GM12878 (cell line): ENCODE measurements at regions of chr9 and their contacts with region 1.

Region 1: DNA sequence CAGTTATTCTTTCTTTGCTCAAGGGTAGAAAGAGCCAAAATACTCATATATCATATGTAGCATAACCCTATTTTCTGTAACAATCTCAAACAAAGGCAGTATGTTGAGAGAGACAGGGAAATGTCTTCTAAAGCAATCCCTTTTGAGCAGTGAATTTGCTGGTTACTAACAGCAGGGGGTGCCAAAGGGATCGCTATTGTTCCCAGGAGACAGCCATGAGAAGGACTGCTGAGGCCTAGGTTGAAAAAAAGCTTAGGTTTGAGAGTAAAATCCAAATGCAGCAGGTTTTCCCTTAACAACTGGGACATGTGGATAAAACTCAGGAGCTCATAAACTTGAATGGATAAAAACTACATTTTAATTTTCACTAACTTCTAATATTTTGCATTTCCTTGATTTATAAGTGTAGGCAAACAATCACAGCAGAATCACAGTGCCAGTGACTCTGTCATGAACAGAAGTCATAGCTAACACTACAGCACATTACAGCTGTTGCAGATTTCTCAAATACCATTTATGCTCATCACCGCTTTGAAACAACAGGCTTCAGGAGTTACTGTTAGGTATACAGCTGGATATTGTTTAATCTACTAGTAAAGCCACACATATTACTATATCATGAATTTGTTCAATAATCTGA is 148.4 kb downstream of the MAPKAP1 start:
- DNase-seq: peak; percentile 33
- ATAC-seq: peak; percentile 79
- H3K4me3 ChIP-seq: no peak overlapping the region
- H3K27ac ChIP-seq: no peak overlapping the region; the same call in 1 of the 2 replicates
- H3K4me1 ChIP-seq: peaks cover 28% of the 10 kb centered on the region
- H3K27me3 ChIP-seq: no peaks in the 10 kb centered on the region
- CTCF ChIP-seq: peak; percentile 79 to 90 (median 86)
- EP300 ChIP-seq: no peak
- POLR2A ChIP-seq: no peak
- RAD21 ChIP-seq: peak; percentile 91

Region 2: DNA sequence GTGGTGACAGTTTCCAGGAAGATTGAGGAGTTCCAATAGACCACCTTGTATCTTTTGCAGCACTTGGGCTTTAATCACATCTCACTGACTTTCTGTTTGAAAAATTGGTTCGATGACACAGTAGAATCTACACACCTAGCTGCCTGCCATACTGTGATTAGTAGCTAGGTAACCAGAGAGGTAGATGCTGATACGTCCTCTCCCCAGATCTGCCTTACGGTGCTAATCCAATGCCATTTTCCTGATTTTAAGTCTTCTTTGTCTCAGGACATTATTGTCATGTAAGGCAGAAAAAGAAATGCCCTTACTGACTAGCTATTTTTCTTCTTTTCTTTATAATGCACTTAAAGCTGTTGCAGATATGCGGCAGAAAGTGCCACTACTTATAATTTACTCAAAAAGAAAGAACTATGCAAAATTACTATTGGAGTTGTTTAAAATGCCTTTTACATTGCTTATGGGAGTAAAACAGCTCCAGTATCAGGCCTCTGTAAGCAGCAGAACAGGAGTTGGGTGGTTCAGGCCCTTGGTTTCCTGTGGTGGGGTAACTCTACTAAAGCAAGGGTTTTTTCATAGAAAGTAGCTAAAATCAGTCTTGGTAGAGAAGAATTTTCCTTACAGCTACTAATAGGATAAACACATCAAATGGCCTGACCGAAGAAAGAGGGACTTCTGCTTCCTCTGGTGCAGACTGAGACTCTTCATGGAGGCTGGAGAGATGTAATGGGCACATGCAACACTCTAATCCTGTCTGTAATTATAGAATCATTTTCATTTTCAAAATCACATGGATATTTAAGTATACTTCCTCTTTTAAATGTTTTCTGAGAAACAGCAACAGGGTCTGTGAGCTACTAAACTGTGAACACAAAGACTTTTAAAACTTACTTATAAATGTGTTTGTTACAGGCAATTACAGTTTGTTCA is 28.7 kb before region 1 on chr9:
- CTCF ChIA-PET with region 1: interaction called, 15 read pairs
- POLR2A ChIA-PET with region 1: no interaction called
- RAD21 ChIA-PET with region 1: interaction called, 19 read pairs
- SMC1A ChIA-PET with region 1: interaction called, 12 read pairs
- in situ Hi-C with region 1: no loop called
- intact Hi-C with region 1: no loop called
- DNase-seq: peak; percentile 57
- ATAC-seq: peak; percentile 91
- H3K4me3 ChIP-seq: no peak overlapping the region; the same call in 1 of the 2 replicates
- H3K27ac ChIP-seq: peak overlapping the region; percentile 75
- H3K4me1 ChIP-seq: peaks cover 30% of the 10 kb centered on the region
- H3K27me3 ChIP-seq: no peaks in the 10 kb centered on the region
- CTCF ChIP-seq: no peak
- EP300 ChIP-seq: no peak
- POLR2A ChIP-seq: no peak
- RAD21 ChIP-seq: no peak

Region 3: GRCh38 chr9:125580701-125581286 is 22.2 kb after region 1 on chr9:
- CTCF ChIA-PET with region 1: interaction called, 13 read pairs
- POLR2A ChIA-PET with region 1: no interaction called
- RAD21 ChIA-PET with region 1: interaction called, 18 read pairs
- SMC1A ChIA-PET with region 1: interaction called, 10 read pairs
- in situ Hi-C with region 1: no loop called
- intact Hi-C with region 1: no loop called
- DNase-seq: peak; percentile 25
- ATAC-seq: peak; percentile 94
- H3K4me3 ChIP-seq: no peak overlapping the region
- H3K27ac ChIP-seq: no peak overlapping the region
- H3K4me1 ChIP-seq: no peaks in the 10 kb centered on the region
- H3K27me3 ChIP-seq: no peaks in the 10 kb centered on the region
- CTCF ChIP-seq: no peak
- EP300 ChIP-seq: no peak
- POLR2A ChIP-seq: no peak
- RAD21 ChIP-seq: no peak

Region 4: DNA sequence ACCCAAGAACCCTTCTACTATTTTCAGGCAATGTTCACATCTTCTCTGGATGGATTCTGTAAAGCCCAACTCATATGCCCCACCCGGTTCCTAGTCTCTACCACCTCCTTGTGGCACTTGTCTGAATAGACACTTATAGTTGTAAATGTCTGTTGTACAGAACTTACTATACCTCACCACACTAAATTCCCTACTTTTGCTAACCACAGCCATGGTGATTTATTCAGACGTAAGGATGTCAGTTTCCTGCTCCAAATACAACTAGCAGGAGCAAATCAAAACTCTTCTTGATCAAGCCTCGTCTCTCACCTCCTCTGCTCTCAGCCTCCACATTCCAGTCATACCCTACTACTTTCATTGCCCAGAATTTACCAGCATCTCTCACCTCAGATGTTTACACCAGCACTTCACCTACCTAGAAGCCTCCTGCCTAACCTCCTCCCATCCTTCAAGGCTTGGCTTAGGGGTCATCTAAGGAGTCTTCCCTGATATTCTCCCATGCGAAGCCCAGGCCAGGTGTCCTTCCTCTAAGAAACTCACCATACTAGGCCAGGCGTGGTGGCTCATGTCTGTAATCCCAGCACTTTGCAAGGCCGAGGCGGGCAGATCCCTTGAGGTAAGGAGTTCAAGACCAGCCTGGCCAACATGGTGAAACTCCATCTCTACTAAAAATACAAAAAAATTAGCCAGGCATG is 73.0 kb after region 1 on chr9:
- CTCF ChIA-PET with region 1: interaction called, 60 read pairs
- POLR2A ChIA-PET with region 1: interaction called, 7 read pairs
- RAD21 ChIA-PET with region 1: interaction called, 75 read pairs
- SMC1A ChIA-PET with region 1: interaction called, 93 read pairs
- in situ Hi-C with region 1: loop called (anchors 5 kb)
- intact Hi-C with region 1: loop called (anchors 1 kb)
- DNase-seq: no peak
- ATAC-seq: peak; percentile 49
- H3K4me3 ChIP-seq: peak overlapping the region; percentile 32; the same call in 1 of the 2 replicates
- H3K27ac ChIP-seq: peak overlapping the region; percentile 98
- H3K4me1 ChIP-seq: peaks cover 75% of the 10 kb centered on the region
- H3K27me3 ChIP-seq: no peaks in the 10 kb centered on the region
- CTCF ChIP-seq: peak; percentile 69 to 74 (median 70)
- EP300 ChIP-seq: no peak
- POLR2A ChIP-seq: no peak
- RAD21 ChIP-seq: peak; percentile 92

Region 5: GRCh38 chr9:125746017-125746773 is 187.6 kb after region 1 on chr9:
- CTCF ChIA-PET with region 1: interaction called, 15 read pairs
- POLR2A ChIA-PET with region 1: no interaction called
- RAD21 ChIA-PET with region 1: interaction called, 10 read pairs
- SMC1A ChIA-PET with region 1: interaction called, 14 read pairs
- in situ Hi-C with region 1: no loop called
- intact Hi-C with region 1: loop called (anchors 5 kb)
- DNase-seq: peak; percentile 82
- ATAC-seq: peak; percentile 86
- H3K4me3 ChIP-seq: peak overlapping the region; percentile 81; the same call in 1 of the 2 replicates
- H3K27ac ChIP-seq: peak overlapping the region; percentile 74
- H3K4me1 ChIP-seq: peaks cover 7% of the 10 kb centered on the region
- H3K27me3 ChIP-seq: no peaks in the 10 kb centered on the region
- CTCF ChIP-seq: no peak
- EP300 ChIP-seq: no peak
- POLR2A ChIP-seq: peak; percentile 85
- RAD21 ChIP-seq: no peak

Region 6: GRCh38 chr9:126164796-126165525 is 606.4 kb after region 1 on chr9:
- CTCF ChIA-PET with region 1: no interaction called
- POLR2A ChIA-PET with region 1: no interaction called
- RAD21 ChIA-PET with region 1: no interaction called
- SMC1A ChIA-PET with region 1: no interaction called
- in situ Hi-C with region 1: no loop called
- intact Hi-C with region 1: no loop called
- DNase-seq: no peak
- ATAC-seq: no peak
- H3K4me3 ChIP-seq: no peak overlapping the region
- H3K27ac ChIP-seq: no peak overlapping the region
- H3K4me1 ChIP-seq: no peaks in the 10 kb centered on the region
- H3K27me3 ChIP-seq: peaks cover 3 to 6% of the 10 kb centered on the region in 2 experiments
- CTCF ChIP-seq: no peak
- EP300 ChIP-seq: no peak
- POLR2A ChIP-seq: no peak
- RAD21 ChIP-seq: no peak

Region 7: GRCh38 chr9:126228781-126229444 is 670.3 kb after region 1 on chr9:
- CTCF ChIA-PET with region 1: no interaction called
- POLR2A ChIA-PET with region 1: no interaction called
- RAD21 ChIA-PET with region 1: no interaction called
- SMC1A ChIA-PET with region 1: no interaction called
- in situ Hi-C with region 1: loop called (anchors 10 kb)
- intact Hi-C with region 1: no loop called
- DNase-seq: no peak
- ATAC-seq: peak; percentile 97
- H3K4me3 ChIP-seq: no peak overlapping the region
- H3K27ac ChIP-seq: no peak overlapping the region
- H3K4me1 ChIP-seq: no peaks in the 10 kb centered on the region
- H3K27me3 ChIP-seq: peaks cover 0 to 2% of the 10 kb centered on the region in 2 experiments; a peak in 1 of 4 replicates
- CTCF ChIP-seq: peak; percentile 92 to 95 (median 94)
- EP300 ChIP-seq: no peak
- POLR2A ChIP-seq: no peak
- RAD21 ChIP-seq: peak; percentile 87